PC-9 (cell line): ENCODE measurements at regions of chr5 and their contacts with region 1.

Region 1: DNA sequence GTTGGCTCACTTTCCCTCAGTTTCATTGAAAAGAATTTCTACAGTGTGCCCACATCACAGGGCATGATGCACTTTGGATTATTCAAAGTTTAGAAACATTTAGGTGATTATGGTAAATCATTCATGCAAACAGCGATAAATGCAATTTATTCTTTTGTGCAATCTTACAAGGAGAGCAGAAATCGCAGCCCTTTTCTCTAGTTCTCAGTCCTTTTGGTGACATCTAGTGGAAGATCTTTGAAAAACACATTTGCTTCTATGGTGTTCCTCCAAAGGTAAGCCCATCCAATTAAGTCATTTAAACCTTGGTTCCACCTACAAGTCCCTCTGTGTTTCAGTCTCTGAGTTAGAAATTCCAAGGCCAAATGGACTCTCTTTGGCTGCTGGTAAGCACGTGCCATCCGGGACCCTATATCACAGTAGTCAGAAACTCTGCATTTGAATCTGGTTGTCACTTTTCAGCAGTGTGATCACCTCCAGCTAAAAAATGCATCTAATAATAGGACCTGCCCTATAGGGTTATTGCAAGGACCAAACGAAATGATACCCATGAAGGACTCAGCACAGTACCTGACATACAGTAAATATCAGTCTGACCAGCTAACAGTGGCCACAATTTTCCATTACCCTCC is 66.4 kb downstream of the MACROH2A1 start:
- DNase-seq: peak in 1 of 2 experiments; percentile 69
- H3K4me3 ChIP-seq: no peak overlapping the region
- H3K27ac ChIP-seq: no peak overlapping the region
- H3K4me1 ChIP-seq: no peaks in the 10 kb centered on the region
- H3K27me3 ChIP-seq: no peaks in the 10 kb centered on the region
- CTCF ChIP-seq: peak; percentile 75

Region 2: GRCh38 chr5:135191084-135191826 is 141.4 kb before region 1 on chr5:
- CTCF ChIA-PET with region 1: no interaction called
- POLR2A ChIA-PET with region 1: no interaction called
- intact Hi-C with region 1: loop called (anchors 5 kb)
- DNase-seq: peak; percentile 70 to 86
- H3K4me3 ChIP-seq: peak overlapping the region; percentile 59
- H3K27ac ChIP-seq: no peak overlapping the region
- H3K4me1 ChIP-seq: peaks cover 24% of the 10 kb centered on the region
- H3K27me3 ChIP-seq: no peaks in the 10 kb centered on the region
- CTCF ChIP-seq: peak; percentile 94

Region 3: DNA sequence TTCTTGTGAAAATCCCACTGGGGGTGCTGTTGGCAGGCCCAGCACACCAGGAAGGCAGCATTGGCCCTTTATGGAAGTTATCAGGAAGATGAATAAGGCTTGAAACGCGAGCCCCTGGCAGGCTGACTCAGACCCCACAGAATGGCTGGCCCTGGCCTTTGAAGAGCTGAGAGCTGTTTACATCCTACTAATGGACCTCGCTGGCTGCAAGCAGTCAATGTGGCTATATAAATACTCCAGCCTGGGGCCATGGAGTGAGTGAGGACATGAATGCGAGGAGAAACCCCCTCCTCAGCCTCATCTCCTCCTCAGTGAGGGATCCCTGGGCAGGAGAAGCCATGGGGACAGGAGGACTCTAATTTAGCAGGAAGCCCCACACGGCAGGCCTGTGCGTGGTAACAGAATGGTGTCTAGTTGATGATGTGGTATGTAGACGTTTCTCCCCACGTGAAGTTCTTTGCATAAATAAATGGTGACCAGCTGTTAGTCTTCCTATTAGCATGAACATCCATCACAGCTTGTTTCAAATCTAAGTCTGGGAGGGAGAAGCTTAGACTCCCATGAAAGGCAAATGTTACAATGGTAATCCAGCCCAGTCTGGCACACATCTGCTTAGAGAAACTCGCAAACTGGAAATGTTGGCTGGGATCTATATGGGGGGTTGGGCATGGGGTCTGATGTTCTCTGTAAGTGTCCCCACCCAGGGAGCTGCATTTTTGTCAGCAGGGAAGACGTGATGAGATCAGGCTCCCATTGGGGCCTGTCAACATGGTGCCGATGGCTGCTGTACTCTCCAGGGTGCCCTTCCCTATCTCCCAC is 123.5 kb before region 1 on chr5:
- CTCF ChIA-PET with region 1: interaction called, 4 read pairs
- POLR2A ChIA-PET with region 1: no interaction called
- intact Hi-C with region 1: loop called (anchors 2 kb)
- DNase-seq: peak; percentile 59 to 77
- H3K4me3 ChIP-seq: no peak overlapping the region
- H3K27ac ChIP-seq: 0 out of 2 replicates have a peak overlapping the region, but pooled peaks have one; percentile 14
- H3K4me1 ChIP-seq: peaks cover 20% of the 10 kb centered on the region
- H3K27me3 ChIP-seq: no peaks in the 10 kb centered on the region
- CTCF ChIP-seq: no peak